Right ventricle myocardium inferior (tissue), 1 donor: ENCODE measurements at regions of chr10 and their contacts with region 1.

Region 1: DNA sequence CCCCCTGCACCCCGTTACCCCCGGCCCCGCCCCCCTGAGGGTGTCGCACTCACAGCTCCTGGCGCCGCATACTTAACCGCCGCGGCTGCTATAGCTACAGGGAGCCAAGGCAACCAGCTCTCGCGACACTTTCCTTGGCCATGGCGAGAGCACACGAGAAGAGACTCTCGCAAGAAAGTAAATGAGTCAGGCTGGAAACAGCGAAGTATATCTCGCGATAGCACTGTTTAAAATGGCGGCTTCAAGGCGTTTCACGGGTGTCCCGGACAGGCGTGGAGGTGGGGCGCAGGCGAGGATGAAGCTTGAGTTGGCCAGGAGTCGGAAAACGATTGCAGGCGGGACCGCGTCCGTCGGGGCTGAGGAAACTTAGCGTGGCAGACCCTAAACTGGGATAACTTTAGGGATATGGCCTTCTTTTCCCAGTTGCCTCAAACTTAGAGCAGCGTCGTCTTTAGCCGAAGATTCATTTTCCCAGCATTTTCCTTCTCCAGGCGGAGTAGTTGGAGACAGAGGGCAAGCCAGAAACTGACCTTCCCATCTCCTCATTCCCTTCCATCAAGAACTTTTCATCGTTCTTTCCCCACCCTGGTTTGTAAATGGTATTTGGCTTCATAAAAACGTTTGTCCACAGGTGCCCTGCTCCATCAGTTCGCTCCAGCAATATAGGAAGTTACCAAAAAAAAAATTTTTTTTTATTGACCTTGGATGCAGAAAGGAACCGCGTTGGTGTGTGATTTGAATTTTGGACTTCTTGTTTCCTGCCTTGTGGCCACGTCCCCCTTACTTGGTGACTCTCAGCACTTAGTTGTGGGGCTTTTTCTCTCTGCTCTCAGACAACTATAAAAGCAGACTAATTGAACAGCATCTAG is 15.2 kb downstream of the MYOZ1 start:
- DNase-seq: peak; percentile 96
- ATAC-seq: peak; percentile 96

Region 2: GRCh38 chr10:73576178-73576889 is 49.8 kb before region 1 on chr10:
- intact Hi-C with region 1: loop called (anchors 5 kb)
- DNase-seq: no peak
- ATAC-seq: peak; percentile 74

Region 3: DNA sequence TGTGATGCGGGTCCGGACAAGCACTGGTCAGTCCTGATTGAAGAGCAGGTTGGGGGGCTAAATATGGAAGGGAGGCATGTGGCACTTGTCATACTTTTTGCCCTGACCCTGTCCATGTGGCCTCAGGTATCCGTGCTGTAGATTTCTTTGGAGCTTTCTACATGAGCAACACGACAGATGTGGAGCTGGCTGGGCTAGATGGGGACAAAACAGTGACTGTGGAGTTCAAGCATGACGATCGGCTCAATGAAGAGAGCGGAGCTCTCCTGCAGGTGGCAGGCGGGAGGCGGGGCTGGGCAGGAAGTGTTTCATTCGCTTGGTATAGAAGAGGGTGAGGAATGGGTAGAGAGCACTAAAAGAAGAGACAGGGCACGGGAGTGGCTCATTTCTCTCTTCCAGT is 142.8 kb after region 1 on chr10:
- intact Hi-C with region 1: no loop called
- DNase-seq: no peak
- ATAC-seq: no peak